ENCODE measurements at regions of chr13 and their contacts with region 1.

Region 1: GRCh38 chr13:71632721-71633120 is 234.3 kb downstream of the DACH1 start:
- DNase-seq: peak; percentile 73
- H3K4me3 ChIP-seq: no peak overlapping the region
- H3K27ac ChIP-seq: peak overlapping the region; percentile 80
- H3K4me1 ChIP-seq: peaks cover 27% of the 10 kb centered on the region
- H3K27me3 ChIP-seq: no peaks in the 10 kb centered on the region
- CTCF ChIP-seq: no peak
- POLR2A ChIP-seq: no peak

Region 2: GRCh38 chr13:71067165-71067815 is 565.4 kb before region 1 on chr13:
- CTCF ChIA-PET with region 1: no interaction called
- POLR2A ChIA-PET with region 1: no interaction called
- dilution Hi-C with region 1: no loop called
- intact Hi-C with region 1: no loop called
- DNase-seq: peak; percentile 35
- H3K4me3 ChIP-seq: no peak overlapping the region
- H3K27ac ChIP-seq: no peak overlapping the region
- H3K4me1 ChIP-seq: no peaks in the 10 kb centered on the region
- H3K27me3 ChIP-seq: no peaks in the 10 kb centered on the region
- CTCF ChIP-seq: peak in 1 of 2 donors; percentile 31
- POLR2A ChIP-seq: no peak

Region 3: GRCh38 chr13:71618159-71618558 is 14.6 kb before region 1 on chr13:
- CTCF ChIA-PET with region 1: no interaction called
- POLR2A ChIA-PET with region 1: no interaction called
- dilution Hi-C with region 1: no loop called
- intact Hi-C with region 1: no loop called
- DNase-seq: peak; percentile 29
- H3K4me3 ChIP-seq: no peak overlapping the region
- H3K27ac ChIP-seq: no peak overlapping the region
- H3K4me1 ChIP-seq: peaks cover 24% of the 10 kb centered on the region
- H3K27me3 ChIP-seq: no peaks in the 10 kb centered on the region
- CTCF ChIP-seq: no peak
- POLR2A ChIP-seq: no peak

Region 4: DNA sequence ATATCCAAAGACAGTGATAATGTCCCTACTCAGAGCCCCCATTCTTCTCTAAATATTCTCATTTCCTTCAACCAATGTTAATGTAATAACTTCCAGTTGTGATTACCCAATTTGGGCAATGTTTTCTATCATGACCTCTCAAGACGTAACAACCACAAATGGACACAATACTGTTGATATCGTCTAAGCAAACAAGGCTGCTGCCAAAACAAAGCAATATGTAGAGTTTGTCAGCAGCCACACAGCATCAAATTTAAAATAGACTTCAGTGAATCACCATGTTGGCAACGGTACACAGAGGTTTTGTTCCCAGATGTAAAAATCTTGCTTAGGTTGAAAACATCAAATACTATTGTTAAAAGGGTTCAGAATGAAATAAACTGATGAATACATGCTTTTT is 29.2 kb after region 1 on chr13:
- CTCF ChIA-PET with region 1: no interaction called
- POLR2A ChIA-PET with region 1: no interaction called
- dilution Hi-C with region 1: no loop called
- intact Hi-C with region 1: loop called (anchors 2 kb)
- DNase-seq: peak; percentile 92
- H3K4me3 ChIP-seq: no peak overlapping the region
- H3K27ac ChIP-seq: no peak overlapping the region
- H3K4me1 ChIP-seq: peaks cover 15% of the 10 kb centered on the region
- H3K27me3 ChIP-seq: no peaks in the 10 kb centered on the region
- CTCF ChIP-seq: no peak
- POLR2A ChIP-seq: no peak

Measured in endothelial cell of umbilical vein (primary cell).